ENCODE measurements at regions of chr12 and their contacts with region 1.

Region 1: GRCh38 chr12:47307680-47308399 is 228.1 kb upstream of the AMIGO2 start:
- DNase-seq: peak; percentile 73
- ATAC-seq: peak; percentile 91
- H3K4me3 ChIP-seq: no peak overlapping the region
- H3K27ac ChIP-seq: no peak overlapping the region
- H3K4me1 ChIP-seq: peaks cover 6% of the 10 kb centered on the region
- H3K27me3 ChIP-seq: no peaks in the 10 kb centered on the region
- CTCF ChIP-seq: peak; percentile 80
- POLR2A ChIP-seq: no peak
- RAD21 ChIP-seq: peak; percentile 90

Region 2: DNA sequence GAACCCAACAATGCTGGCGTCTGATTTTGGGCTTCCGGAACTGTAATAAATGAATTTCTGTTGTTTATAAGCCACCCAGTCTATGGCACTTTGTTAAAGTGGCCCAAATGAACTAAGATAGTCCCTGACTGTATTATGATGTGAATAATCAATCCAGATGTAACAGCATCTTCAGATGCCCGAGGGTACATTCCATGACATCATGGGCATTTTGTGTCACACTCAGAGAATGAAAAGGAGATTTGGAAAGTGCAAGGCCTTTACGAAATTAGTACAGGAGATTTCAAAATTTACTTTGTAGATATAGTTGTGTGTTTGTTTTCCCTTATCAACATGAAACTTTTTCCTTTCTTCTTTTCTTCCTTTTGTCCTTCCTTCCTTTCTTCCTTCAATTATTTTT is 173.9 kb before region 1 on chr12:
- CTCF ChIA-PET with region 1: no interaction called
- POLR2A ChIA-PET with region 1: no interaction called
- dilution Hi-C with region 1: no loop called
- in situ Hi-C with region 1: no loop called
- intact Hi-C with region 1: no loop called
- DNase-seq: no peak
- ATAC-seq: no peak
- H3K4me3 ChIP-seq: no peak overlapping the region
- H3K27ac ChIP-seq: no peak overlapping the region
- H3K4me1 ChIP-seq: no peaks in the 10 kb centered on the region; the same call in 1 of the 2 replicates
- H3K27me3 ChIP-seq: no peaks in the 10 kb centered on the region
- CTCF ChIP-seq: no peak
- POLR2A ChIP-seq: no peak
- RAD21 ChIP-seq: no peak

Region 3: GRCh38 chr12:47362126-47362705 is 54.4 kb after region 1 on chr12:
- CTCF ChIA-PET with region 1: no interaction called
- POLR2A ChIA-PET with region 1: no interaction called
- dilution Hi-C with region 1: no loop called
- in situ Hi-C with region 1: no loop called
- intact Hi-C with region 1: no loop called
- DNase-seq: no peak
- ATAC-seq: no peak
- H3K4me3 ChIP-seq: no peak overlapping the region
- H3K27ac ChIP-seq: no peak overlapping the region
- H3K4me1 ChIP-seq: no peaks in the 10 kb centered on the region
- H3K27me3 ChIP-seq: no peaks in the 10 kb centered on the region
- CTCF ChIP-seq: no peak
- POLR2A ChIP-seq: no peak
- RAD21 ChIP-seq: no peak

Region 4: DNA sequence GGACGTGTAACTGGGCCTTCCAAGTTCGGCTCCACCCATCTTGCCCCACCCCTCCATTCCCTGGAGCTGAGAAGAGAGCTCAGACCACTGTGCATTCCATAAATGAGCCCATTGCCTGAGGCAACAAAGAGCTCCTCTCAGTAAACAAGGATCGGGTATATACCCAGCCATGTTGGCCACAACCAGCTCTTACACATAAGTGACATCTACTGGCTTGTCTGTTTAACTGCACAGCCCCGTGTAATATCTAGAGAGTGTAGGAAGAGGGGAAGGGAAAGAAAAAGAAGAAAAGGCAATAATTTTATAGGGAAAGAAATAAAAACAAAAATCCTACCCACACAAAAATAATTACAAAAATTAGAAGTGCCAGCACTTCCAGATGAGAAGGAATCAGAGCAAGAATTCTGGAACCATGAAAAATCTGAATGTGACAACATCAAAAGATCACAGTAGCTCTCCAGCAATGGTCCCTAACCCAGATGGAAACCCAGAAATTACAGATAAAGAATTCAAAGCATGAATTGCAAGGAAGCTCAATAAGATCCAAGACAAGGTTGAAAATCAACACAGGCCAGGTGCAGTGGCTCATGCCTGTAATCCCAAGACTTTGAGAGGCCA is 89.9 kb after region 1 on chr12:
- CTCF ChIA-PET with region 1: no interaction called
- POLR2A ChIA-PET with region 1: no interaction called
- dilution Hi-C with region 1: no loop called
- in situ Hi-C with region 1: no loop called
- intact Hi-C with region 1: loop called (anchors 2 kb)
- DNase-seq: peak; percentile 76
- ATAC-seq: peak; percentile 80
- H3K4me3 ChIP-seq: no peak overlapping the region
- H3K27ac ChIP-seq: no peak overlapping the region
- H3K4me1 ChIP-seq: peaks cover 4% of the 10 kb centered on the region; the same call in 1 of the 2 replicates
- H3K27me3 ChIP-seq: no peaks in the 10 kb centered on the region
- CTCF ChIP-seq: peak; percentile 60
- POLR2A ChIP-seq: no peak
- RAD21 ChIP-seq: peak; percentile 81

Region 5: GRCh38 chr12:47458270-47458669 is 150.4 kb after region 1 on chr12:
- CTCF ChIA-PET with region 1: no interaction called
- POLR2A ChIA-PET with region 1: no interaction called
- dilution Hi-C with region 1: no loop called
- in situ Hi-C with region 1: no loop called
- intact Hi-C with region 1: no loop called
- DNase-seq: no peak
- ATAC-seq: no peak
- H3K4me3 ChIP-seq: no peak overlapping the region
- H3K27ac ChIP-seq: no peak overlapping the region
- H3K4me1 ChIP-seq: no peaks in the 10 kb centered on the region
- H3K27me3 ChIP-seq: peaks cover 4% of the 10 kb centered on the region
- CTCF ChIP-seq: no peak
- POLR2A ChIP-seq: no peak
- RAD21 ChIP-seq: no peak

Region 6: GRCh38 chr12:47577206-47577989 is 269.6 kb after region 1 on chr12:
- CTCF ChIA-PET with region 1: no interaction called
- POLR2A ChIA-PET with region 1: no interaction called
- dilution Hi-C with region 1: no loop called
- in situ Hi-C with region 1: no loop called
- intact Hi-C with region 1: no loop called
- DNase-seq: no peak
- ATAC-seq: no peak
- H3K4me3 ChIP-seq: no peak overlapping the region
- H3K27ac ChIP-seq: no peak overlapping the region
- H3K4me1 ChIP-seq: no peaks in the 10 kb centered on the region
- H3K27me3 ChIP-seq: peaks cover 24% of the 10 kb centered on the region
- CTCF ChIP-seq: no peak
- POLR2A ChIP-seq: no peak
- RAD21 ChIP-seq: no peak